Right cardiac atrium (tissue), 5 donors: ENCODE measurements at regions of chr12 and their contacts with region 1.

Region 1: GRCh38 chr12:108803428-108804105 is 53.8 kb downstream of the SSH1 start:
- DNase-seq: peak; percentile 64 to 80 (median 67)
- ATAC-seq: peak; percentile 68 to 71
- H3K4me3 ChIP-seq: no peak overlapping the region
- H3K27ac ChIP-seq: peak overlapping the region; percentile 96
- H3K4me1 ChIP-seq: peaks cover 15% of the 10 kb centered on the region
- H3K27me3 ChIP-seq: no peaks in the 10 kb centered on the region

Region 2: GRCh38 chr12:108664338-108665258 is 139.0 kb before region 1 on chr12:
- intact Hi-C with region 1: loop called (anchors 2 to 5 kb)
- DNase-seq: peak; percentile 75 to 88 (median 83)
- ATAC-seq: peak; percentile 95
- H3K4me3 ChIP-seq: no peak overlapping the region
- H3K27ac ChIP-seq: peak overlapping the region; percentile 93
- H3K4me1 ChIP-seq: peaks cover 6% of the 10 kb centered on the region
- H3K27me3 ChIP-seq: no peaks in the 10 kb centered on the region

Region 3: GRCh38 chr12:108856428-108857157 is 53.0 kb after region 1 on chr12:
- intact Hi-C with region 1: loop called (anchors 5 to 10 kb)
- DNase-seq: peak; percentile 83 to 92 (median 92)
- ATAC-seq: peak; percentile 51 to 59
- H3K4me3 ChIP-seq: peak overlapping the region; percentile 90
- H3K27ac ChIP-seq: peak overlapping the region; percentile 87
- H3K4me1 ChIP-seq: peaks cover 24% of the 10 kb centered on the region
- H3K27me3 ChIP-seq: no peaks in the 10 kb centered on the region

Region 4: GRCh38 chr12:109052414-109053323 is 249.1 kb after region 1 on chr12 and contains the start of gene USP30:
- intact Hi-C with region 1: no loop called
- DNase-seq: peak; percentile 84 to 92 (median 92)
- ATAC-seq: peak; percentile 97
- H3K4me3 ChIP-seq: peak within 1 kb of the TSS; percentile 91
- H3K27ac ChIP-seq: peak within 1 kb of the TSS; percentile 86
- H3K4me1 ChIP-seq: peaks cover 6% of the 10 kb centered on the region
- H3K27me3 ChIP-seq: no peaks in the 10 kb centered on the region
- total RNA-seq, gene USP30: 10.1 to 12.7 (median 11.7) TPM